ENCODE measurements at regions of chr15 and their contacts with region 1.

Region 1: GRCh38 chr15:66497502-66498455 is at the start of gene SNAPC5:
- DNase-seq: peak; percentile 91
- ATAC-seq: peak; percentile 93
- H3K4me3 ChIP-seq: peak within 1 kb of the TSS; percentile 78
- H3K27ac ChIP-seq: peak within 1 kb of the TSS; percentile 78
- H3K4me1 ChIP-seq: no peaks in the 10 kb centered on the region
- H3K27me3 ChIP-seq: no peaks in the 10 kb centered on the region
- CTCF ChIP-seq: peak; percentile 90
- POLR2A ChIP-seq: peak; percentile 71
- RAD21 ChIP-seq: peak; percentile 57
- total RNA-seq, gene SNAPC5: 26.3 and 40.8 TPM in 2 replicates

Region 2: GRCh38 chr15:65916664-65917406 is 580.9 kb before region 1 on chr15:
- CTCF ChIA-PET with region 1: no interaction called
- POLR2A ChIA-PET with region 1: no interaction called
- dilution Hi-C with region 1: no loop called
- in situ Hi-C with region 1: loop called (anchors 25 kb)
- intact Hi-C with region 1: no loop called
- DNase-seq: peak; percentile 74
- ATAC-seq: peak; percentile 99
- H3K4me3 ChIP-seq: no peak overlapping the region
- H3K27ac ChIP-seq: no peak overlapping the region
- H3K4me1 ChIP-seq: peaks cover 5% of the 10 kb centered on the region; the same call in 1 of the 2 replicates
- H3K27me3 ChIP-seq: no peaks in the 10 kb centered on the region
- CTCF ChIP-seq: peak; percentile 78
- POLR2A ChIP-seq: no peak
- RAD21 ChIP-seq: peak; percentile 84

Region 3: DNA sequence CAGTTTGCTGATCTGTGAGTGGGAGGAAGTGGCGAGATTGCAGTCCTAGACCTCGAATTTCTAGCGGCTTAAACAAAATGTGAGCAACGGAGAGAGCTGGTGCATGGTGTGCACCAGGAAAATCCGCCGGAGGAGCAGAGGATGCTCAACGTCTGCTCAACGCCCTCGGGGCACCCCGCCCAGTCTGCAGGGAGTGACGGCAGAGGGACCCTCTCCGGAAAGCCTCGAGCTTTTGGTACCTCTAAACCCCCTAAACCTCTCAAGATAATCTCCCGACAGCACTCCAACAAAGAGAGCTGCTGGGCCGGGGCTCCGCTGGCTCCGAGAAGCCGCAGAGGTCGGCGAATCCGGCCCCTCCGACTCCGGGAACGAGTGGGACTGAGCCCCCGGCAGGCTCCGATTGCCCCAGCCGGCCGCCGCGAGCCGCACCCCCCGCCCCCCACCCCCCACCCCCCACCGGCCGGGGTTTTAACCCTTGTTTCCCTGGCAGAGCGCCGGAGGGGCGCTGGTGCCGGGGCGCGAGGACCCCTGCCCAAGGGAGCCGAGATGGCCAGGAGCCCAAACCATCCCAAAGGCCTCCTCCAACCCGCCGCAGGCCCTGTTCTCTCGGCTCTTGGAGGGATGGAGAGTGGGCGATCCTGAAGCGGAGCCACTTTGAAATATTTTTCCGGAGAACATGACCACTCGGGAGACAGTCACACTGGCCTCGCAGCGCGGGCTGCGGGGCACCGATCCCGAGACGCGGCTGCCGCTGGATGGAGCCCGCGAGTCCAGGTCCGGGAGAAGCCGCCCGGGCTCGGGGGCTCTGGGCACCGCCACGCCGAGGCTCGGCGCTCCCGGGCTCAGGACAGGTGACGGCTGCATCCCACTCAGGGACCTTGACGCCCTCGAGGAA is 245.7 kb before region 1 on chr15:
- CTCF ChIA-PET with region 1: no interaction called
- POLR2A ChIA-PET with region 1: no interaction called
- dilution Hi-C with region 1: no loop called
- in situ Hi-C with region 1: no loop called
- intact Hi-C with region 1: loop called (anchors 5 kb)
- DNase-seq: no peak
- ATAC-seq: peak; percentile 84
- H3K4me3 ChIP-seq: peak overlapping the region; percentile 43
- H3K27ac ChIP-seq: no peak overlapping the region
- H3K4me1 ChIP-seq: peaks cover 6% of the 10 kb centered on the region; the same call in 1 of the 2 replicates
- H3K27me3 ChIP-seq: peaks cover 85% of the 10 kb centered on the region
- CTCF ChIP-seq: peak; percentile 60
- POLR2A ChIP-seq: no peak
- RAD21 ChIP-seq: peak; percentile 40

Region 4: DNA sequence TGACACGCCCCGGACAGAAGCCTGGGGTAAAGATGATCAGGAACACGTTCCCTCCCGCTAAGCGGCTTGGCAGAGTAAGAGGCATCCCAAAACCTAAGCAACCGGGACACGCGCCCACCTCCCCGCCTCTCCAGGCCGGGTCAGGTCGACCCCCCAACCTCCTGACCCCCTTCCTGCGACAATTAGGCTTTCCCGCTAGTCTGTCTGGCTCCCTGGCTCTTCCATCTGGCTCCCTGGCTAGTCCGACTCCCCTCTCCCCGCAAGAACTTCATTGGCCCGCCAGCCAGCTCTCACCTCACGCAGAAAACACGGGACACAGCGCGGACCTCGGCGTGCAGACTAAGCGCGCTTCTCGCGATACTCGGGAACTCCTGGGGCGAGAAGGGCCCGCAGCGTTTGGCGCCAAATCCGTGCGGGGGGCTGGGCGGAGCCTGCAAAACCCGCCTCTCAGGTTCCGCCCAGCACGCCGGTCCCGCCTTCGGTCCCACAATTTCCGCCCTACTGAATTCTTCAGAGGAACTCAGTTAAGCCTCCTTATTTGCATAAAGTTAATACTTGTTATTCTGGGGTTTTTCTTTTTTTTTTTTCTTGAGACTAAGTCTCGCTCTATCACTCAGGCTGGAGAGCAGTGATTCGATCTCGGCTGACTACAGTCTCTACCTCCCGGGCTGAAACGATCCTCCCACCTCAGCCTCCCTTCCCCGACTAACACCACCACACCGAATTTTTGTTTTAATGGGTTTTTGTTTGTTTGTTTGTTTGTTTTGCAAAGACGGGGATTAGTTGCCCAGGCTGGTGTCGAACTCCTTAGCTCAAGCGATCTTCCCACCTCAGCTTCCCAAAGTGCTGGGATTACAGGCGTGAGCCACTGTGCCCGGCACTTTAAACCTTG is 141.2 kb before region 1 on chr15 and contains the start of gene TIPIN:
- CTCF ChIA-PET with region 1: no interaction called
- POLR2A ChIA-PET with region 1: no interaction called
- dilution Hi-C with region 1: no loop called
- in situ Hi-C with region 1: no loop called
- intact Hi-C with region 1: loop called (anchors 2 kb)
- DNase-seq: peak; percentile 95
- ATAC-seq: peak; percentile 99
- H3K4me3 ChIP-seq: peak within 1 kb of the TSS; percentile 57
- H3K27ac ChIP-seq: peak within 1 kb of the TSS; percentile 56
- H3K4me1 ChIP-seq: 0 out of 2 replicates have a peak, but pooled peaks cover 1% of the 10 kb centered on the region
- H3K27me3 ChIP-seq: no peaks in the 10 kb centered on the region
- CTCF ChIP-seq: no peak
- POLR2A ChIP-seq: peak; percentile 46; the same call in 1 of the 2 replicates
- RAD21 ChIP-seq: no peak
- total RNA-seq, gene TIPIN: 7.3 and 15.0 TPM in 2 replicates

Region 5: DNA sequence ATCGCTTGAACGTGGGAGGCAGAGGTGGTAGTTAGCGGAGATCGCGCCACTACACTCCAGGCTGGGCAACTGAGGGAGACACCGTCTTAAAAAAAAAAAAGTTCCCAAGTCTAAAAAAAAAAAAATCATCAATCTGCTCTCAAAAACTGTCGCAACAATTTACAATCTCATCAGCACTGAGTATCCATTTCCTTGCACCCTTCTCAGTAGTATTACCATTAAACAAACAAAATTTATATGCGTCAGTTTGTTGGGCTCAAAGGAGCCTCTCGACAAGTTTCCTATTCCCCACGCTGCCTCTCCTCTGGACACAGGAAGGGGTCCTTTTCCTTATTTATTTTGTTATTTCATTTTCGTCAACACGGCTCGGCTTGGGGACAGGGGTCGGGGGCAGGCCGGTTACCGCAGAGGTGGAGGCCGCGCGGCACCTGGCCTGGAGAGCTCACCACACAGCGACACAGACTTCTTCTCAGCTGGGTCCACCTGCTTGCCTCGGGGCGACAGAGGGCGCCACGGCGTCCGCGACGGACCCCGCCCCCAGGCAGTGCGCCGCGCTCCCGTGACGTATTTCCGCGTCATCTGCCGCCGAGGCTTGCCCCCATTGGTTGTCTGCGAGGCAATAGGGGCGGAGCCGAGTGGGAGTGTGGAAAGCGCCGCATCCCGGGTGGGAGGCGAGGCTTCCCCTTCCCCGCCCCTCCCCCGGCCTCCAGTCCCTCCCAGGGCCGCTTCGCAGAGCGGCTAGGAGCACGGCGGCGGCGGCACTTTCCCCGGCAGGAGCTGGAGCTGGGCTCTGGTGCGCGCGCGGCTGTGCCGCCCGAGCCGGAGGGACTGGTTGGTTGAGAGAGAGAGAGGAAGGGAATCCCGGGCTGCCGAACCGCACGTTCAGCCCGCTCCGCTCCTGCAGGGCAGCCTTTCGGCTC is 111.3 kb before region 1 on chr15 and contains the start of gene MAP2K1:
- CTCF ChIA-PET with region 1: interaction called, 10 read pairs
- POLR2A ChIA-PET with region 1: no interaction called
- dilution Hi-C with region 1: no loop called
- in situ Hi-C with region 1: loop called (anchors 5 kb)
- intact Hi-C with region 1: loop called (anchors 1 kb)
- DNase-seq: peak; percentile 96
- ATAC-seq: peak; percentile 98
- H3K4me3 ChIP-seq: peak within 1 kb of the TSS; percentile 79
- H3K27ac ChIP-seq: peak within 1 kb of the TSS; percentile 85
- H3K4me1 ChIP-seq: peaks cover 6% of the 10 kb centered on the region
- H3K27me3 ChIP-seq: no peaks in the 10 kb centered on the region
- CTCF ChIP-seq: peak; percentile 82
- POLR2A ChIP-seq: peak; percentile 93
- RAD21 ChIP-seq: peak; percentile 37
- total RNA-seq, gene MAP2K1: 37.8 and 58.9 TPM in 2 replicates

Measured in IMR-90 (cell line).